ENCODE measurements at regions of chr11 and their contacts with region 1.

Region 1: GRCh38 chr11:123103326-123103980 is 41.5 kb upstream of the HSPA8 start:
- DNase-seq: peak; percentile 46
- H3K4me3 ChIP-seq: no peak overlapping the region
- H3K27ac ChIP-seq: no peak overlapping the region
- H3K27me3 ChIP-seq: no peaks in the 10 kb centered on the region
- CTCF ChIP-seq: peak; percentile 76

Region 2: GRCh38 chr11:122572592-122572991 is 530.9 kb before region 1 on chr11:
- in situ Hi-C with region 1: no loop called
- DNase-seq: no peak
- H3K4me3 ChIP-seq: no peak overlapping the region
- H3K27ac ChIP-seq: peak overlapping the region; percentile 62
- H3K27me3 ChIP-seq: no peaks in the 10 kb centered on the region
- CTCF ChIP-seq: no peak

Region 3: DNA sequence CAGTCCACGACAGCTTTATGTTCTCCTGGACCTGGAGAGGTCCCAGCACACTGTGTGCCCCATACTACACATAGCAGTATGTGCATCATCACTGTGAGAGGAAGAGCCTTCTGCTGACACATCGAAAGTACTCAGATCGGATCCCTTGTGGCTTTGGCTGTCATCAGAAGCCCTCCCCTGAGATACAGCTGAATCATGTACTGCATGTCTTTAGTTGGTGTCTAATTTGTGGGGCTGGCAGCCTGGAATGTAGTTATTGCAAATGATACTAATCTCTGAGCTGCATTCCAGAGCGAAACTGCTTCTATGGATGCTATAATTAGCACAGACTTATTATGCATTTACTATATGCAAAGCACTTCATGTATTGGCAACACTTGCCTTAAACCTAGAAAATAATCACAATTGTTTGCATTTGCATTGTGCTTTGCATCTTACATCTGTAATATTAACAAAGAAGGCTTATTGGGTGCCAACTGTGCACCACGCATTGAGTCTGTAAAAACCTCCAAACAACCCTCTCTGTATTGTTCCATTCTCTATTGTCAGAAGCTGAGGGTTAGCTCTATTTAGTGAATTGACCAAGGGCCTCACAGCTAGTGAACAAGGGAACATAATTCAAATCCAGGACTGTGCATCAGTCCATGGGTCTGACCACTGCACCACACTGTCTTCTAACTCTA is 354.3 kb before region 1 on chr11:
- in situ Hi-C with region 1: no loop called
- DNase-seq: peak; percentile 96
- H3K4me3 ChIP-seq: no peak overlapping the region
- H3K27ac ChIP-seq: peak overlapping the region; percentile 48
- H3K27me3 ChIP-seq: no peaks in the 10 kb centered on the region
- CTCF ChIP-seq: no peak

Region 4: DNA sequence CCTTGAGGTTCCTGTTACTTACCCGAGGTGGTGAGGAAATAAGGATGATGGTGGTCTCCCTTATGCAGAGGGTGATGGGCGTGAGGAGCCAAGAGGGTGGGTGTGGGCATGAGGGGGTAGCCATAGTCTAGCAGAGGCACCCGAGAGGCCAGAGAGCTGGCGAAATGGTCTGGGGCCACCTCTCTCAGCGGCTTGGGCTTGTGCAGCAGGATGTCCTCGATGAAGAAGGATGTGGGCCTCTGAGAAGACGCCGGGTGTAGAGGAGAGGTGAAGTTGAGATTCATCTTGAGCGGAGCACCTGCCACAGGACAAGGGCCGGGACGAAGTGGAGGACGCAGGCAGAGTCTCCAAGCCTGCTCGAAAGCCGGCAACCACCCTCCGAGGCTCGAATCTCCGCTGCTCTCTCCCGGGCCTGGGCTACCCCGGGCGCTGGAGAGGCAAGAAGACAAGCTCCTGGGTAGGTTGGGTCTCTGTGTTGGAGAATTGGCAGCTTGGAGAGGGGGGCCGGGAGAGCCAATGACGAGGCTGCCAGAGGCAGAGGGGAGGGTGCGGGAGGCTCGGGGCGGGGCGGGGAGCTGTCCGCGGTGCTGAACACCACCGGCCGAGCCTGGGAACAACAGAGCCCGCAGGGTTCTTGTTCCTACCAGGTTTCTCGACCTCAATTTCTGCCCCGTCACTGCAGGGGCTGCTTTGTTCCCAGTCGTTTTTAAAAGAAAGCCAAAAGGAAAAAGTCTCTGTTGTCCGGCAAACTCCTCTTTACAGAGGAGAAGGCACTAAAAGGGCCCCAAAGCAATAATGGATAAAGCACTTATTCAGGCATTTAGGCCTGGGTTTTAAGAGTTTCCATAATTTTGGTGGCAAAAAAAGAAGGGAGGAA is 121.8 kb before region 1 on chr11 and contains the start of gene BSX:
- in situ Hi-C with region 1: no loop called
- DNase-seq: peak; percentile 38
- H3K4me3 ChIP-seq: no peak within 1 kb of the TSS
- H3K27ac ChIP-seq: no peak within 1 kb of the TSS
- H3K27me3 ChIP-seq: peaks cover 85% of the 10 kb centered on the region
- CTCF ChIP-seq: no peak

Region 5: DNA sequence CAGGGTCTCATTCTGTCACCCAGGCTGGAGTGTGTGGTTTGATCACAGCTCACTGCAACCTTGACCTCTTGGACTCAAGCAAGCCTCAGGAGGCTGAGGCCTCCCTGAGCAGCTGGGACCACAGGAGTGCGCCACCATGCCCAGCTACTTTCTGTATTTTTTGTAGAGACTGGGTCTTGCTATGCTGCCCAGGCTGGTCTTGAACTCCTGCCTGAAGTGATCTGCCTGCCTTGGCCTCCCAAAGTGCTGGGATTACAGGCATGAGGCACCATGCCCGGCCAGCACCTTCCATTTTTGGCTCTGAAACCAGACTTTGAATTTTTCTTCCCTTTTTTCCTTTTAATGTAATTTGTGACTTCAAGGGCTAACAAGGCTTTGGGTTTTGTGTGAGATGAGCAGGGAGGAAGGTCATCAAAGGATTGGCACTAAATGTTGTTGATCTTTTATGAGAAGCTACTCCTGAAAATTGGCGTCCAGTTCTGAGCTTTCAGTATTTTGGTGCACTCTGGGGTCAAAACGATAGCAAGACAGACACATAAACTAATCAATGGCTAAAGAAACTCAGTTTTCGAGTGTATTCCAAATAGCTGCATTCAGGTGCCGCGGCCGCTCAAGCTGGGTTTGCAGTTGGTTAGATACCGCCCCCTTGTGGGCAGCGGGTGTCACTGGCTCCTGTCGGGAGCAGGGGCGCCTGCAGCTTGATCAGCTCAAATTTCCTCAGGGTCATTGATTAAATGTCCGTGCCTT is 143.5 kb after region 1 on chr11:
- in situ Hi-C with region 1: loop called (anchors 25 kb)
- DNase-seq: peak; percentile 64
- H3K4me3 ChIP-seq: no peak overlapping the region
- H3K27ac ChIP-seq: no peak overlapping the region
- H3K27me3 ChIP-seq: no peaks in the 10 kb centered on the region
- CTCF ChIP-seq: peak; percentile 99

Region 6: GRCh38 chr11:123454060-123454651 is 350.7 kb after region 1 on chr11:
- in situ Hi-C with region 1: no loop called
- DNase-seq: peak; percentile 9
- H3K4me3 ChIP-seq: no peak overlapping the region
- H3K27ac ChIP-seq: no peak overlapping the region
- H3K27me3 ChIP-seq: no peaks in the 10 kb centered on the region
- CTCF ChIP-seq: no peak